Activated T-helper 2 cell treated with anti-CD3 and anti-CD28 coated beads, Interferon-gamma antibody, Interleukin-2, Interleukin-4, amounts not matched to agents 10 μg/mL and 5 μg/mL and 100 μg/mL, durations not matched to agents 14 hours and 24 hours and 36 hours (primary cell): ENCODE measurements at regions of chr2 and their contacts with region 1.

Region 1: DNA sequence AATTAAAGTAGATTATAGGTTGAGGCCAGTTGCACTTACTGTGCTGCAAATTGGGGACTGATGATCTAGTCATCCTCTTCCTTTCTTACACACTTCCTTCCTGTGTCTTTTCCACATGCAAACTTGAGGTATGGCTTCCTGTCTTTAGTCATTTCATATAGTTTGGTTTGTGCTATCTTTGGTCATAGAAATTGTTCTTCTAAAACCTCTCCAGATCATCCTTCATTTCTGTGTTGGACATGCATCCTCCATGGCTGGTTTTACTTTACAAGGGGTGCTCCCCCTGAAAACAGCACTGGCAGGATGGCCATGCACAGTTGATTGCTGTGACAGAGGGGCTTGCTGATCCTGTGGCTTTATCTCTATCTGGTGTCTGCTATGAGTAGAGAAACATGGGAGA is 36.5 kb downstream of the MGAT5 start:
- DNase-seq: no peak
- H3K4me3 Mint-ChIP-seq: no peak overlapping the region
- H3K27ac Mint-ChIP-seq: no peak overlapping the region
- H3K4me1 Mint-ChIP-seq: peaks cover 9% of the 10 kb centered on the region
- H3K27me3 Mint-ChIP-seq: peaks cover 24% of the 10 kb centered on the region

Region 2: DNA sequence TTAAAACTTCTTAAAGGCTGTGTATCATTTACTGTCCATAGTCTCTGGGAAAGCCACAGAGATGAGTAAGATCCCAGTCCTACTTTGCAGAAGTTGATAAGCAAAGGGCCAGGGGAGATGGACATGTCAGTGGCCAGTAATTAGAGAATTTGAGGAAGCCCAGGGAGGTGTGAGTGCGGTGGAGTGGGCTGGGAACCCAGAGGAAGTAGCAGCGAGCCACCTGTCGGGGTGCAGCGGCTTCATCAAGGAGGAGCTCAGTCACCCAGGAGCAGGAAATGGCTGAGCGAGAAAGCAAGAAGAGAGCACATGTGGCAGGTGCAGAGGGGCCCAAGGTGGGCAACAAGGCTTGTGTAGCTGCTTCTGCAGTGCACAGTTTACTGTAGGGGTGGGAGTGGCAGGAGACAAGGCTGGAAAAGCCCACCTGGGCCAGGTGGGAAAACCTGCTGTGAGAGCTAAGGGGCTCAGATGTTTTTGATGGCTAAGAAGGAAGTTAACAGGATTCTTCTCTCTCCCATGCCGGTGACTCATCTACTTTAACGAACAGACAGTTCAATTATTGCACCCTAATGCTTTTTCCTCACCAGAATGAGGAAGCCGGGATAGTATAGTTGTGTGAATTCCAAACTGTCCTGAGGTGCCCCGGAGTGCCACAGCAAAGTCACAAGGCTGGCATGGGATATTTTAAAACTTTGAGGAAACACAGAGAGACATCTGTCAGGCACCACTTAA is 71.3 kb before region 1 on chr2:
- intact Hi-C with region 1: loop called (anchors 5 kb)
- DNase-seq: no peak
- H3K4me3 Mint-ChIP-seq: no peak overlapping the region
- H3K27ac Mint-ChIP-seq: no peak overlapping the region
- H3K4me1 Mint-ChIP-seq: peaks cover 27% of the 10 kb centered on the region
- H3K27me3 Mint-ChIP-seq: peaks cover 41% of the 10 kb centered on the region

Region 3: GRCh38 chr2:134232868-134233727 is 57.3 kb before region 1 on chr2:
- intact Hi-C with region 1: loop called (anchors 1 kb)
- DNase-seq: no peak
- H3K4me3 Mint-ChIP-seq: no peak overlapping the region
- H3K27ac Mint-ChIP-seq: peak overlapping the region; percentile 10
- H3K4me1 Mint-ChIP-seq: peaks cover 42% of the 10 kb centered on the region
- H3K27me3 Mint-ChIP-seq: peaks cover 17% of the 10 kb centered on the region

Region 4: DNA sequence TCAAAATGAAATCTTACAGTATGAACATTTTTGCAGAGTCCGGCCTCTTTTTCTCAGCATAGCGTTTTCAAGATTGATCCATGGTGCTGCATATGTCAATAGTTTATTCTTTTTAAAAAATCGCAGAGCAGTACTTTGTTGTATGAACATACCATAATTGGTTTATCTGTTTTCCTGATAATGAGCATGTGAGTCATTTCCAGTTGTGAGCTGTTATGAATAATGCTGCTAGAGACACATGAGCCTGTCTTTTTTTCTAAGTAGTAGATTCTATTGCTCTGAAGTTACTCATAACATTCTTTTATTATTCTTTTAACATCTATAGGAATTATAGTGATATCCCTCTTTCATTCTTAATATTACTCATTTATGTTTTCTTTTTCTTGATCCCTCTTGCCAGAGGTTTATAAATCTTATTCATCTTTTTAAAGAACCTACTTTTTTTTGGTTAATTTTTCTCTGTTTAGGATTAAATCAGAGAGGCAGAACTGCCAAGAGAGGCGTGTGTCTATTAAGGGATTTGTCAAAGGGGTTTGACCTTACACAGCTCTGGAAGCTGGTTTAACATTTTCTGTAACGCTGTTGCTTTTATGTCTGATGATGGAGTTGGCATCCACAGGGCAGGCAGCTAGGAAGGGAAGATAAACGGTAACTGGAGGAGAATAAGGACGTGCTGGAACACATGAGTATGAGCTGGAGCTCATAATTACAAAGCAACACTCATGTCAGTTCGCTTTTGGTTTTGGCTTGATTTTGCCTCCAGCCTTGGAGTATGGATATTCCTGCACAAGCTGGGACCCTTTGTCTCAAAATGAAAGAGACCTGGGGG is 11.0 kb after region 1 on chr2:
- intact Hi-C with region 1: loop called (anchors 1 kb)
- DNase-seq: no peak
- H3K4me3 Mint-ChIP-seq: no peak overlapping the region
- H3K27ac Mint-ChIP-seq: no peak overlapping the region
- H3K4me1 Mint-ChIP-seq: peaks cover 15% of the 10 kb centered on the region
- H3K27me3 Mint-ChIP-seq: peaks cover 37% of the 10 kb centered on the region

Region 5: DNA sequence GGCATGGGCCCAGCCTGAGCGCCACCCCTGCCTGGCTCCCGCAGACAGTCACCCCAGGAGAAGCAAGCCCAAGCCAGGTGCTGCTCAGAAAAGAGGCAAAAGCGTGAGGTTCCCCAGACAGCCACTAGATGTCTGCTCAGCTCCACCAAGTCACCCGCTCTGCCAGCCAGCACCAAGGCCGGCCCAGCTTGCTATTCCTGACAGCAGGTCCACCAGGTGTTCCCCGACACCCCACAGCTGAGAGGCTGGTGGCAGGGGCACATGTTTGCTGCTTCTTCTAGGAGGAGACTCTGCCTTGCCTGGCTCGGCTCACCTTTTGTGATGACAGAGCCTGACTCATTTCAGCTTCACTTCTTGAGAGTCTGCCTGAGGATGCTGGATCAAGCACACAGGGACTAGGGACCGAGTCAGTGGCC is 170.2 kb after region 1 on chr2:
- intact Hi-C with region 1: no loop called
- DNase-seq: no peak
- H3K4me3 Mint-ChIP-seq: no peak overlapping the region
- H3K27ac Mint-ChIP-seq: no peak overlapping the region
- H3K4me1 Mint-ChIP-seq: no peaks in the 10 kb centered on the region
- H3K27me3 Mint-ChIP-seq: no peaks in the 10 kb centered on the region